Right ventricle myocardium inferior (tissue), 1 donor: ENCODE measurements at regions of chr9 and their contacts with region 1.

Region 1: GRCh38 chr9:113337714-113338113 is 2.4 kb downstream of the WDR31 start:
- DNase-seq: no peak
- ATAC-seq: no peak

Region 2: GRCh38 chr9:113309204-113309813 is 28.4 kb before region 1 on chr9:
- intact Hi-C with region 1: loop called (anchors 2 kb)
- DNase-seq: no peak
- ATAC-seq: no peak